Activated CD4-positive, alpha-beta T cell treated with anti-CD3 and anti-CD28 coated beads for 36 hours (primary cell): ENCODE measurements at regions of chr12 and their contacts with region 1.

Region 1: GRCh38 chr12:117134059-117134458 is 34.8 kb upstream of the TESC start:
- DNase-seq: peak; percentile 81
- ATAC-seq: peak; percentile 88
- H3K4me3 Mint-ChIP-seq: peak overlapping the region; percentile 1
- H3K27ac Mint-ChIP-seq: peak overlapping the region; percentile 79
- H3K4me1 Mint-ChIP-seq: peaks cover 15% of the 10 kb centered on the region
- H3K27me3 Mint-ChIP-seq: no peaks in the 10 kb centered on the region

Region 2: DNA sequence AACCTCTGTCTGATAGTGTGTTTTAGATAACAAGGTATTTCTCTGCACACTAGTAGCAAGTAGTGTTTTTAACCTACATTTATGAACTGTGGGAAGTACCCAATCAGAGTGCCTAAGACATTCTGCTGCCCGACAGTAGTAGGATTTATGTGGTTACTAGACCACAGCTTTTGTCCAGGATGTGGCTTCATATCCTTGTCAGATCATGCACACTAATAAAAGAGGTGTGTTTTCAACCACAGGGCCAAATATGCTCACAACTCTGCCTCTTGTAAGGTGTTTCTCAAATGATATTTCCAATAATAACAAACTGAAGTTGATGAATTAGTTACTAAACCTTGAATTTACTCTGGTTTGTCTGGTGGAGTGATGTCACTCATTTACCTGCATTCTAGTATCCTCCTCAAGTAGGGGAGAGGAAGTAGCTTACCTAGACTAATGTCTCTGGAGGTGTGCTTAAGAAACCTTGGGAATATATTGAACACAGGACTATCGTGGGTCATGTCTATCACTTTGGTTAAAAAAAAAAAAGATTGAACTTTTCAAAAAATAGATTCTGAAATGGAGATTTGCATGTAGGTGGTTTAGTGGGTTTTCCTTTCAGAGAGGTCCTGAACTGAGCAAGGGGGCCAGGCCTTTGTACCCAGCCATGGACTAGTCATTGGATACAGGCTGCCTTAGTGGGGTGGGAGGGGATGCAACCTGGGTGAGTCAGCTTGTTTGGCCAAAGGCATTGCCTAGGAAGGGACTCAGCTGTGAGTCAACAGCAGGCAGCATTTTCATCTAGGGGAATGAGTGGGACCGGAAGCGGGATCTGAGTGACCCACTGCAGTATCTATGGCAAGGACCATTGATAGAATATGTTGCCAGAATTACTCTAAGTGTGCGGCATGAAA is 209.3 kb before region 1 on chr12:
- CTCF ChIA-PET with region 1: no interaction called
- POLR2A ChIA-PET with region 1: interaction called, 3 read pairs
- intact Hi-C with region 1: loop called (anchors 1 to 10 kb)
- DNase-seq: peak; percentile 67
- ATAC-seq: peak; percentile 75
- H3K4me3 Mint-ChIP-seq: no peak overlapping the region
- H3K27ac Mint-ChIP-seq: peak overlapping the region; percentile 76
- H3K4me1 Mint-ChIP-seq: peaks cover 68% of the 10 kb centered on the region
- H3K27me3 Mint-ChIP-seq: peaks cover 12% of the 10 kb centered on the region

Region 3: GRCh38 chr12:117025481-117026151 is 108.4 kb before region 1 on chr12:
- CTCF ChIA-PET with region 1: no interaction called
- POLR2A ChIA-PET with region 1: no interaction called
- intact Hi-C with region 1: loop called in 1 of 2 experiments (anchors 1 kb)
- DNase-seq: peak; percentile 72
- ATAC-seq: peak; percentile 86
- H3K4me3 Mint-ChIP-seq: no peak overlapping the region
- H3K27ac Mint-ChIP-seq: peak overlapping the region; percentile 61
- H3K4me1 Mint-ChIP-seq: peaks cover 4% of the 10 kb centered on the region
- H3K27me3 Mint-ChIP-seq: no peaks in the 10 kb centered on the region

Region 4: DNA sequence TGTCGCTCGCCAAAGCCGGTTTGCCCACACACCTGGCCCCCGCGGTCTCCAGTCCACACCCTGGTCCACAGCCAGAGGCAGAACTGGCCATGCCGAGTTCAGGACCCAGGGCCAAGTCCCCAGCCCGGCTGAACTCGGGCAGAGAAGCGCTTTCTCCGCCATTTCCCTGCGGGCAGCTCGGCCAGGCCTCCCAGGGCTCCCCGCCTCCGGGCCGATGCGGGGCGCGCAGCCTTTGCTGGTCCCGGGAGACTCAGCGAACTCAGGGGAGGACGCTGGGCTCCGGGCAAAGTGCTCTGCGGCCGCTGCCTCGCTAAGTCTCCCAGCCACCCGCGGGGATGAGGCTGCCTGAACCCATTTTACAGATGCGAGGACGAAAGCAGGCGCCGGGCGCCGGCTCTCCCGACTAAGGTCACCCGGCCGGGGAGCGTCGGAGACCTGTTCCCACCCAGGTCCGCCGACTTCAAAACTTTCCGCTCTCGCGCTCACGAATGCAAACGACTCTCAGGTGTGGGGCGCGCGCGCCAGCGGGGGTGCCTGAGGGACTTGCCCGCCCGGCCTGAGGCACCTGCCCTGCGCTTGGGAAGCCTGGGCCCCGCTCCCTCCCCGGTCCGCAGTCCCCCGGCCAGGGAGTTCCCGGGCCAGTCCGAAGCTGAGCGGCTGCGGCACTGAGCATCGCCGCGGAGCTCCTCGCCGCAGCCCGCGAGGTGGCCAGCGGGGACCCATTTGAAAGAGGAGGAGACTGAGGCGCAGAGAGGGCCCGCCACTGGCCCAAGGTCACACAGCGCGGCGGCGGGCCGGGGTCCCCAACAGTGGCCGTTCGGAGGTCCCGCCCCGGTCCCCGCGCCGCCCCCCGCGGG is 35.5 kb before region 1 on chr12:
- CTCF ChIA-PET with region 1: interaction called, 3 read pairs
- POLR2A ChIA-PET with region 1: no interaction called
- intact Hi-C with region 1: loop called in 1 of 2 experiments (anchors 1 kb)
- DNase-seq: peak; percentile 63
- ATAC-seq: peak; percentile 25
- H3K4me3 Mint-ChIP-seq: peak overlapping the region; percentile 71
- H3K27ac Mint-ChIP-seq: no peak overlapping the region
- H3K4me1 Mint-ChIP-seq: peaks cover 18% of the 10 kb centered on the region
- H3K27me3 Mint-ChIP-seq: peaks cover 15% of the 10 kb centered on the region

Region 5: GRCh38 chr12:117119592-117120198 is 14.4 kb before region 1 on chr12:
- CTCF ChIA-PET with region 1: interaction called, 19 read pairs
- POLR2A ChIA-PET with region 1: no interaction called
- intact Hi-C with region 1: no loop called
- DNase-seq: peak; percentile 47
- ATAC-seq: peak; percentile 78
- H3K4me3 Mint-ChIP-seq: no peak overlapping the region
- H3K27ac Mint-ChIP-seq: no peak overlapping the region
- H3K4me1 Mint-ChIP-seq: peaks cover 6% of the 10 kb centered on the region
- H3K27me3 Mint-ChIP-seq: no peaks in the 10 kb centered on the region